ENCODE measurements at regions of chr19 and their contacts with region 1.

Region 1: GRCh38 chr19:44903602-44904425 is 1.8 kb upstream of the APOE start:
- DNase-seq: peak; percentile 83
- ATAC-seq: peak; percentile 71
- H3K4me3 Mint-ChIP-seq: no peak overlapping the region
- H3K27ac Mint-ChIP-seq: no peak overlapping the region
- H3K4me1 Mint-ChIP-seq: peaks cover 10% of the 10 kb centered on the region
- H3K27me3 Mint-ChIP-seq: peaks cover 19% of the 10 kb centered on the region
- CTCF ChIP-seq: peak; percentile 97

Region 2: GRCh38 chr19:44796701-44797115 is 107.1 kb before region 1 on chr19:
- CTCF ChIA-PET with region 1: no interaction called
- POLR2A ChIA-PET with region 1: no interaction called
- intact Hi-C with region 1: no loop called
- DNase-seq: no peak
- ATAC-seq: no peak
- H3K4me3 Mint-ChIP-seq: no peak overlapping the region
- H3K27ac Mint-ChIP-seq: peak overlapping the region; percentile 11
- H3K4me1 Mint-ChIP-seq: peaks cover 9% of the 10 kb centered on the region
- H3K27me3 Mint-ChIP-seq: no peaks in the 10 kb centered on the region
- CTCF ChIP-seq: no peak

Region 3: GRCh38 chr19:44890366-44891015 is 13.3 kb before region 1 on chr19:
- CTCF ChIA-PET with region 1: interaction called, 4 read pairs
- POLR2A ChIA-PET with region 1: interaction called, 27 read pairs
- intact Hi-C with region 1: no loop called
- DNase-seq: peak; percentile 100
- ATAC-seq: peak; percentile 81
- H3K4me3 Mint-ChIP-seq: peak overlapping the region; percentile 78
- H3K27ac Mint-ChIP-seq: peak overlapping the region; percentile 95
- H3K4me1 Mint-ChIP-seq: peaks cover 31% of the 10 kb centered on the region
- H3K27me3 Mint-ChIP-seq: no peaks in the 10 kb centered on the region
- CTCF ChIP-seq: no peak

Region 4: DNA sequence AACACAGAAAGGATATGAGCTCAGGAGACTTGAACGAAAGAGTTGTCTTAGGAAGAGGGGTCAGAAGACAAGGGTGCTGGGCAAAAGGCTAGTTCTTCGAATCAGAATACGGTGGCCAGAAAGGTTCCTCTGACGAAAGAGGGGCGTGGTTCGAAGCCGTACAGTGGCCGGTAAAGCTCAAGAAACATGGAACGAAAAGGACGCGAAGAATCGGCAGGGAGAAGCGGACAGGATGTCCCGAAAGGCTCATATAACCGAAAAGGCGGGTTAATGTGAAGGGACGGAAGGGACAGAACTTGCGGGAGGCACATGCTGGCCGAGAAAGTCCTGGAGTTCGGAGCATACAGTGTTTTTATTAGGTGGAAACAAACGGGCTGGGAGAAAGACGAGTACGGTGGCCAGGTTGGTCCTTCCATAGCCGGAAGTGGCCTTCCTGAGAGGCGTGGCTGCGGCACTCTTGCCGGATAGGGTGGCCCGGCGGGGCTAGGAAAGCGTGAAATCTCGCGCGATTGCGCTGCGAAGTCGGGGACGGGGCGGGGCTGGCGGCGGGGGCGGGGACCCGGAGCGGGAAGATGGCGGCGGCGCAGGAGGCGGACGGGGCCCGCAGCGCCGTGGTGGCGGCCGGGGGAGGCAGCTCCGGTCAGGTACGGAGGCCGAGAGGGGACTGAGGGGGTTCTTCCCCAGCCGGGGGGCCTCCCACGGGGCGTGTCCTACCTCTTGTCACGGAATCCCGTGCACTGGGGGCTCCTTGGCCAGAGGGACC is 51.2 kb after region 1 on chr19 and contains the start of gene CLPTM1:
- CTCF ChIA-PET with region 1: interaction called, 46 read pairs
- POLR2A ChIA-PET with region 1: interaction called, 5 read pairs
- intact Hi-C with region 1: loop called (anchors 5 kb)
- DNase-seq: peak; percentile 97
- ATAC-seq: peak; percentile 94
- H3K4me3 Mint-ChIP-seq: peak within 1 kb of the TSS; percentile 94
- H3K27ac Mint-ChIP-seq: peak within 1 kb of the TSS; percentile 100
- H3K4me1 Mint-ChIP-seq: peaks cover 43% of the 10 kb centered on the region
- H3K27me3 Mint-ChIP-seq: no peaks in the 10 kb centered on the region
- CTCF ChIP-seq: no peak
- total RNA-seq, gene CLPTM1: 38.6 to 39.8 TPM

Region 5: GRCh38 chr19:44988896-44989556 is 85.2 kb after region 1 on chr19:
- CTCF ChIA-PET with region 1: no interaction called
- POLR2A ChIA-PET with region 1: no interaction called
- intact Hi-C with region 1: no loop called
- DNase-seq: peak; percentile 79
- ATAC-seq: peak; percentile 96
- H3K4me3 Mint-ChIP-seq: no peak overlapping the region
- H3K27ac Mint-ChIP-seq: peak overlapping the region; percentile 38
- H3K4me1 Mint-ChIP-seq: no peaks in the 10 kb centered on the region
- H3K27me3 Mint-ChIP-seq: no peaks in the 10 kb centered on the region
- CTCF ChIP-seq: peak; percentile 50

Region 6: GRCh38 chr19:45038931-45039893 is 135.4 kb after region 1 on chr19 and contains the start of gene CLASRP:
- CTCF ChIA-PET with region 1: no interaction called
- POLR2A ChIA-PET with region 1: no interaction called
- intact Hi-C with region 1: no loop called
- DNase-seq: peak; percentile 91
- ATAC-seq: peak; percentile 98
- H3K4me3 Mint-ChIP-seq: peak within 1 kb of the TSS; percentile 92
- H3K27ac Mint-ChIP-seq: peak within 1 kb of the TSS; percentile 94
- H3K4me1 Mint-ChIP-seq: peaks cover 28% of the 10 kb centered on the region
- H3K27me3 Mint-ChIP-seq: no peaks in the 10 kb centered on the region
- CTCF ChIP-seq: no peak
- total RNA-seq, gene CLASRP: 72.7 to 80.5 TPM

Measured in activated CD8-positive, alpha-beta T cell treated with anti-CD3 and anti-CD28 coated beads for 36 hours (primary cell).